ENCODE measurements at regions of chr7 and their contacts with region 1.

Region 1: DNA sequence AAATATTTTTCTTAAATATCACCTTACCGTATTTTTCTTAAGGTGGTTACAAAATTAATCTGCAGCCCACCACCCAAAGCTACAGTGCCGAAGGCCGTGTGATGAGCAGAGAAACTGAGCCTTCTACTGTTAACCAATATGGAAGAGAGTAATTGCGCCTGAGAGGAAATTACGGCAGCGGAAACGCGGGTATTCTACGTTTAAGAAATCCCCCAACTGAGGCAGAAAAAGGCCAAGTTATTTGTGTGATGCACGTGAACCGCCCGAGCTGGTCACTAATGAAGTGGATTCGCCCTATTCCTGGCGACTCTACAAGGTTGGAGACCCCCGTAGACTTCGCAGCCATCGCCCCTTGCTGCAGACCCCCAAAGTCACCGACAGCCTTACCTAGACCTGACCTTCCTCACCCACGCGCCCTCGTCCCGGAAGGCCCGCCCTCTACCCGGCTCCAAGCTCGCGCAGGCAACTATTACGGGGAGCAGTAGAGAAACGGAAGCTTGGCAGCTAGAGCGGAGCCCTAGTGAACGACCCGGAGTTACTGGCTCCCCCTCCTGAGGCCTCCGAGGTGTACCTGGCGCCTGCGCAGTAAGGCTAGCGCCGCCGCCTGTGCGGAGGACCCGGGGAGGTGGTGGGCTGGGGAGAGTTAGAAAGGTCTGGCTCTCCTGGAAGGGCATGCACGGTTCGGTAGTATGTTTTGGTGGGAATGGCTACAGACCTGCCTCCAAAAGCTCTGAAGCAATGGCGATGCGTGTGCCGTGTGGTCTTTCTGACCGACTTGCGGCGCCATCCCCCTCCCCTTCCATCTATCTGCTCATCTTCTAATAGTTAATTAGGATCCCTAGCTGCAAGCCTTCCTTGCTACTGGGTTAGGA is at the start of gene MRPS33:
- DNase-seq: peak; percentile 93 to 94
- H3K4me3 ChIP-seq: peak within 1 kb of the TSS; percentile 91
- H3K27ac ChIP-seq: peak within 1 kb of the TSS; percentile 42
- H3K4me1 ChIP-seq: peaks cover 16% of the 10 kb centered on the region
- H3K27me3 ChIP-seq: peaks cover 23% of the 10 kb centered on the region; the same call in 1 of the 2 replicates
- CTCF ChIP-seq: peak; percentile 43; the same call in 1 of the 2 replicates
- total RNA-seq, gene MRPS33: 70.8 and 84.4 TPM in 2 replicates

Region 2: GRCh38 chr7:140479062-140479738 is 535.6 kb before region 1 on chr7 and contains the start of gene MKRN1:
- CTCF ChIA-PET with region 1: interaction called, 10 read pairs
- POLR2A ChIA-PET with region 1: no interaction called
- intact Hi-C with region 1: loop called (anchors 2 kb)
- DNase-seq: peak; percentile 92 to 98
- H3K4me3 ChIP-seq: peak within 1 kb of the TSS; percentile 86
- H3K27ac ChIP-seq: peak within 1 kb of the TSS; percentile 71
- H3K4me1 ChIP-seq: peaks cover 26% of the 10 kb centered on the region
- H3K27me3 ChIP-seq: no peaks in the 10 kb centered on the region
- CTCF ChIP-seq: no peak
- total RNA-seq, gene MKRN1: 166 and 182 TPM in 2 replicates

Region 3: GRCh38 chr7:140673063-140673773 is 341.5 kb before region 1 on chr7:
- CTCF ChIA-PET with region 1: no interaction called
- POLR2A ChIA-PET with region 1: no interaction called
- intact Hi-C with region 1: loop called (anchors 5 kb)
- DNase-seq: peak; percentile 56 to 77
- H3K4me3 ChIP-seq: peak overlapping the region; percentile 79
- H3K27ac ChIP-seq: peak overlapping the region; percentile 26; the same call in 1 of the 2 replicates
- H3K4me1 ChIP-seq: peaks cover 31% of the 10 kb centered on the region
- H3K27me3 ChIP-seq: no peaks in the 10 kb centered on the region
- CTCF ChIP-seq: no peak; the same call in 1 of the 2 replicates

Region 4: DNA sequence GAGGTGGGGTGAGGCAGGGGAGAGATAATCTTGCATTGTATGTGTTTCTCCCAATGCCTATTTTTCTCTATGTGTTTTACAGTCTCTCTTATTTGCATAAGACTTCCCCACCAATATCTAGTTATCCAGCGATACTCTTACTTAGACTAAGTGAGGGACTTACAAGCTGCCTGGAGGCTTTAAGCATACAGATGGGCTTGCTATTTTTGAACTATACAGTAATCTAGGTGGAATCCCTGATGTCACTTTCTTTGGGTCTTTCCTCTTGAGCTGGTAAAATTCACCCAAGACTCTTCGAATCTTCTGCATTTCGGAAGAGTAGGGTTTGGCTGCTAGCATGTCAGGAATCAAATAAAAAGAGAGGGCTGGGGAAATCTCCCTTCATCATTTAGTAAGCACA is 241.7 kb before region 1 on chr7:
- CTCF ChIA-PET with region 1: no interaction called
- POLR2A ChIA-PET with region 1: no interaction called
- intact Hi-C with region 1: no loop called
- DNase-seq: no peak
- H3K4me3 ChIP-seq: no peak overlapping the region
- H3K27ac ChIP-seq: no peak overlapping the region
- H3K4me1 ChIP-seq: no peaks in the 10 kb centered on the region
- H3K27me3 ChIP-seq: no peaks in the 10 kb centered on the region
- CTCF ChIP-seq: no peak

Region 5: DNA sequence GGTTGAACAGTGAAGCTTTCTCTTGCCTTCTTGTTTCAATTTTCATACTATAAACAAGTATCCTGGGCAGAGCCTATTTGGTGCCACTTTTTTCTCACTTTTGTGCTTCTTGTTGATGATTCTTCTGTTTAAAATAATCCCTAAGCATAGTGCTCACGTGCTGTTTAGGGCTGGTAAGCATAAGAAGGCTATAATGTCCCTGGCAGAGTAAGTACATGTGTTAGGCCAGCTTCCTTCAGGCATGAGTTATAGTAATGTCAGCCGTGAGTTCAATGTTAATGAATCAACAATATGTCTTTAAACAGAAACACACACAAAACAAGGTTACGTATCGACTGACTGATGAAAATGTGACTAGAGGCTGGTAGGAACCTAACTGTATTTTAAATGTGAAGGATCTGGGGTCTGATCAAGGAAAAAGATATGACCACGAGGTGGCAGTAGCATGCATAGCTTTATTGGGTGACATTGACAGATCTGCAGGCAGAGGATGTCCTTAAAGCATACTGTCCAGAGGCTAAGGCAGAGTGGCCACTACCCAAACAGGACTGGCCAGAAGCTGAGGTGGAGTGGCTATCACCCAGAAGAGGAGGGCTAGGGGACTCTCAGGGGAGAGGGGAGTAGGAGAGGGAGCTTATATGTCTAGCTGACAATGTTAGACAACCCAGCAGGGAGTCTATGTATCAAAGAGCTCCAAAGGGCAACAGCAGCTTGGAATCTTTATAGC is 203.8 kb before region 1 on chr7:
- CTCF ChIA-PET with region 1: interaction called, 11 read pairs
- POLR2A ChIA-PET with region 1: no interaction called
- intact Hi-C with region 1: loop called (anchors 1 kb)
- DNase-seq: peak; percentile 58 to 68
- H3K4me3 ChIP-seq: no peak overlapping the region
- H3K27ac ChIP-seq: no peak overlapping the region
- H3K4me1 ChIP-seq: no peaks in the 10 kb centered on the region
- H3K27me3 ChIP-seq: no peaks in the 10 kb centered on the region
- CTCF ChIP-seq: peak; percentile 91

Region 6: GRCh38 chr7:140961117-140961516 is 53.6 kb before region 1 on chr7:
- CTCF ChIA-PET with region 1: no interaction called
- POLR2A ChIA-PET with region 1: no interaction called
- intact Hi-C with region 1: no loop called
- DNase-seq: no peak
- H3K4me3 ChIP-seq: no peak overlapping the region
- H3K27ac ChIP-seq: no peak overlapping the region
- H3K4me1 ChIP-seq: no peaks in the 10 kb centered on the region
- H3K27me3 ChIP-seq: no peaks in the 10 kb centered on the region
- CTCF ChIP-seq: no peak

Region 7: GRCh38 chr7:141654551-141654950 is 639.8 kb after region 1 on chr7:
- CTCF ChIA-PET with region 1: no interaction called
- POLR2A ChIA-PET with region 1: no interaction called
- intact Hi-C with region 1: loop called (anchors 2 kb)
- DNase-seq: peak; percentile 56 to 69
- H3K4me3 ChIP-seq: no peak overlapping the region
- H3K27ac ChIP-seq: no peak overlapping the region
- H3K4me1 ChIP-seq: peaks cover 6% of the 10 kb centered on the region
- H3K27me3 ChIP-seq: no peaks in the 10 kb centered on the region
- CTCF ChIP-seq: peak; percentile 79

Measured in PC-9 (cell line).